Right ventricle myocardium superior (tissue), 1 donor: ENCODE measurements at regions of chrX and their contacts with region 1.

Region 1: DNA sequence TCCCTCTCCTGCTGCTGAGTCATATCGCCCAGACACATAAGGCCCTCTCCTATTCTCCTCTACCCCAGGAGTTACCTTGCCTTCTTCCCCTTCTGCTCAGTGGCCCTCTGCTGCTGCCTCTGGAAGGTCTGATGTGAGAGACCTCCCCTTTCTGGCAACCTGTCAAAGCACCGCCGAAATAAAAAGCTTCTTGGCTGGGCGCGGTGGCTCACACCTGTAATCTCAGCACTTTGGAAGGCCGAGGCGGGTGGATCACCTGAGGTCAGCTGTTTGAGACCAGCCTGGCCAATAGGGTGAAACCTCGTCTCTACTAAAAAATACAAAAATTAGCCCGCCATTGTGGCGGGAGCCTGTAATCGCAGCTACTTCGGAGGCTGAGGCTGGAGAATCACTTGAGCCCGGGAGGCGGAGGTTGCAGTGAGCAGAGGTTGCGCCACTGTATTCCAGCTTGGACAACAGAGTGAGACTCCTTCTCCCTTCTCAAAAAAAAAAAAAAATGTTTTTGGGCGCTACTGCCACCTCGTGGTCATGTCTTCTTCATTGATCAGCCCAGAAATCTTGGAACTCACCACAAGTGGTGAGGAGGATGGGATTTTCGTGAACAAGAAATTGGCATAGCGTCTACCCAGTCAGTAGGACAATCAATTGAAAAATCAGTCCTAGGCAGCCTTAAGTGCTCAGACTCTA is 8.6 kb upstream of the ZXDA start:
- DNase-seq: peak; percentile 43
- ATAC-seq: peak; percentile 67

Region 2: DNA sequence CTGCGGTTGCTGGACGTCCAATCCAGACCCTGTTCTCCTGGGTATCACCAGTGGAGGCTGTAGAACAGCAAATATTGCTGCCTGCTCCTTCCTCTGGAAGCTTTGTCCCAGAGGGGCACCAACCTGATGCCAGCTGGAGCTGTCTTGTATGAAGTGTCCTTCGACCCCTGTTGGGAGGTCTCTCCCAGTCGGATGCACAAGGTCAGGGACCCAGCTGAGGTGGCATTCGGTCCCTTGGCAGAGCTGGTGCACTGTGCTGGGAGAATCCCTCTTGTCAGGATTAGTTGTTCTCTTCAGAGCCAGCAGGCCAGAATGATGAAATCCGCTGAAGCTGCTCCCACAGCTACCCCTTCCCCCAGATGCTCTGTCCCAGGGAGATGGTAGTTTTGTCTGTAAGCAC is 437.4 kb before region 1 on chrX:
- intact Hi-C with region 1: no loop called
- DNase-seq: peak; percentile 6
- ATAC-seq: no peak

Region 3: DNA sequence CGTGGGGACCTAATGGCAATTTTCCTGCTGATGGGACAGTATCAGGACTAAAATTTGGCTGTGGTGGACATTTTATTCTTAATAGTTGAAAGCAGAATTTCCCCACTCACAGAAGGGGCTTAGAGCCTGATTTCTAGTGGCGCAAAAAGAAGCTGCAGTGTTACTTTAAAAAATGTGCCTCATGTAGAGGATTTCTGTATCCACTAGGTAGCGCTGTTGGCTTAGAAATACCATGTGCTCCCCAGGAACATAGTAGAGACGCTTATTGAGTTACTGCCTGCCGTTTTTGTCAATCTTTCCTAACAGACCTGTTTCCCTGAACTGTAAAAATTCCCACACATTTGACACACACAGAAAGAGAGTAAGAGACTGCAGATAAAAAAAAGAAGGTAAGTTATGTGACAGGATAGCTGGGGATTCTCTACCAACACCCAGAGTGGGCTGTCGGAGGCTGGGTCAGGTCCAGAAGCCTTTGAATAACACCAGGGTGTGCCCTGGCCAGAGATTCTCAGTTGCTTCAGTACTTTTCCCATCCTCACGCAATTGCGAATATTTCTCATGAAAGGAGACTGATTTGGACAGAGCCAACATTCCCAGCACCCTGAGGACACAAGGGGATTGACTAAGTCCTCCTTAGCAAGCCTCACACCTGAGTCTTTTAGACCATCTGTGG is 97.1 kb before region 1 on chrX:
- intact Hi-C with region 1: loop called (anchors 5 kb)
- DNase-seq: no peak
- ATAC-seq: peak; percentile 90